GM18951 (cell line): ENCODE measurements at regions of chr1 and their contacts with region 1.

Region 1: GRCh38 chr1:157181258-157181657 is 43.1 kb upstream of the ETV3 start:
- POLR2A ChIP-seq: no peak

Region 2: DNA sequence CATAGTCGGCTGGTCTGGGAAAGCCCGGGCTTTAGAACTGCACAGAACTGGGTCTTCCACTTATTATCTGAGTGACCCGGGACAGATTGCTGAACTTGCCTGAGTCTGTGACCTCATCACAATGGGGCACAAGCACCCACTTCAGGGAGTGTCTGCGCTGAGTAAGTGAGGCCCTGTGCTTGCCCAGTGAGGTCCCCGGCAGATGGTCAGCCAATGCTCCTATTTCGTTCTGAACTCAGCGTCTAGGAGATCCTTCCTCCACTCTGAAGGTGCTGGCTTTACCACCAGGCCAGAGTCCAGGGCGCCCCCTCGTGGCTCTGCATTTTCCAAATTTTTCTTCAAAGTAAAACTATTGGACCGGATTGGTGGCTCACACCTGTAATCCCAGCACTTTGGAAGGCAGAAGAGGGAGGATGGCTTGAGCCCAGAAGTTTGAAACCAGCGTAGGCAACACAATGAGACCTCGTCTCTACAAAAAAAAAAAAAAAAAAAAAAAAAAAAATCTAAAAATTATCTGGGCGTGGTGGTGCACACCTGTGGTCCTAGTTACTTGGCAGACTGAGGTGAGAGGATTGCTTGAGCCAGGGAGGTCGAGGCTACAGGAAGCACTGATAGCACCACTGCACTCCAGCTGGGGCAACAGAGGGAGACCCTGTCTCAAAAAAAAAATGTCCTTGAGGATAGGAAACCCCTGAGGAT is 309.4 kb after region 1 on chr1:
- in situ Hi-C with region 1: loop called (anchors 5 kb)
- POLR2A ChIP-seq: no peak